PC-9 (cell line): ENCODE measurements at regions of chr4 and their contacts with region 1.

Region 1: GRCh38 chr4:51943221-51943934 is 76.8 kb downstream of the LRRC66 start:
- DNase-seq: peak; percentile 38 to 40
- H3K4me3 ChIP-seq: no peak overlapping the region
- H3K27ac ChIP-seq: no peak overlapping the region
- H3K4me1 ChIP-seq: peaks cover 13% of the 10 kb centered on the region
- H3K27me3 ChIP-seq: no peaks in the 10 kb centered on the region
- CTCF ChIP-seq: no peak

Region 2: DNA sequence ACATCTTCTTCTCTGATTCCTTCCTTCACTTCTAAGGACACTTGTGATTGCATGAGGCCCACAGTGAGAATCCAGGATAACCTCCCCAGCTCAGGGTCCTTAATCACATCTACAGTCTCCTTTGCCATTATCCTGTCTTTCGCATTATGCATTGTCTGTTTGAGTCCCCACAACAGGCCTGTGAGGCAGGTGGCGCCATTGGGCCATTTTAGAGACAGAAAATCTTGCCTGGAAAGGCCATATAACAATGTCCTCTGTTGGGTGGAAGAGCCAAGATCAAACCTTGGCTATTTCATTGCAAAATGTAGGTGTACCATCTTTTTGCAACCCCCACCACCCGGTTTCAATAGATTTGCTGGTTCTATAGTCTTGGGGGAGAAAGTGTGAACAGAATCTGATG is 112.2 kb before region 1 on chr4:
- CTCF ChIA-PET with region 1: no interaction called
- POLR2A ChIA-PET with region 1: no interaction called
- intact Hi-C with region 1: no loop called
- DNase-seq: peak in 1 of 2 experiments; percentile 37
- H3K4me3 ChIP-seq: no peak overlapping the region
- H3K27ac ChIP-seq: no peak overlapping the region
- H3K4me1 ChIP-seq: no peaks in the 10 kb centered on the region
- H3K27me3 ChIP-seq: no peaks in the 10 kb centered on the region
- CTCF ChIP-seq: peak; percentile 56

Region 3: DNA sequence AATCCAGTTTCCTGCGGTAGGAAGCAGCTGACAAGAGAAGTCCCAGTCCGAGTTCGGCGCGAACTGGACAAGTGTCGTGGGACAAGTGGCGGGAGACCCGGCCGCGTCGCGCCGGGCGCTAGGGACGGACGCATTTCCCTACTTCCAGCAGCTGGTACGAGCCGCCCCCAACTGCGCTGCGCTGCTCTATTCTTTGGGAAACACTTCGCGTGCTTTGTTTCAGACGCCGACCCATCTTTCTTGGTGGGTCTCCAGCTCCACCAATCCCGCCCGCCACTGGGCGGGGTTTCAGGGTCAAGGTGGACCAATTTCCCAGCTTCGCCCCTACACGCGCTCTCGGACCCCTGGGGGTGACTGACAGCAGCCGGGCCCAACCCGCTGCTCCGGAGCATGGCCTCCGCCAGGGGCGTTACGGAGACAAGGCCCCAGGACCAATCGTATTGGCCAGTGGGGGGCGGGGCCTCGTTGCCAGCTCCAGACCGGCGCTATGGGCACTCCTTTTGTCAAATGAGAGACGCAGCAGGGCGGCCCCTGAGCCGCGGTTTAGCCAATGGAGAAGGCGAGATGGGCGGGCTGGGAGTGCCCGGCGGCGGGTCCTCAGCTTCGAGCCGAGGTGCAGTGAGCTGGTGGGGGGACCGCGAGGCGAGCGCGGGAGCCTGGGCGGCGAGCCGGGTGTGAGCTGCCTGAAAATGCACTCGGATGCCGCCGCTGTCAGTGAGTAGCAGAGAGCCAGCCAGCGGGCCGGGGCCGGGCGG is 100.6 kb before region 1 on chr4 and contains the start of gene DCUN1D4:
- CTCF ChIA-PET with region 1: no interaction called
- POLR2A ChIA-PET with region 1: interaction called, 3 read pairs
- intact Hi-C with region 1: loop called (anchors 2 kb)
- DNase-seq: peak; percentile 93 to 97
- H3K4me3 ChIP-seq: peak within 1 kb of the TSS; percentile 73
- H3K27ac ChIP-seq: peak within 1 kb of the TSS; percentile 51; the same call in 1 of the 2 replicates
- H3K4me1 ChIP-seq: peaks cover 9% of the 10 kb centered on the region
- H3K27me3 ChIP-seq: no peaks in the 10 kb centered on the region
- CTCF ChIP-seq: no peak; the same call in 1 of the 2 replicates
- total RNA-seq, gene DCUN1D4: 24.9 and 25.3 TPM in 2 replicates

Region 4: DNA sequence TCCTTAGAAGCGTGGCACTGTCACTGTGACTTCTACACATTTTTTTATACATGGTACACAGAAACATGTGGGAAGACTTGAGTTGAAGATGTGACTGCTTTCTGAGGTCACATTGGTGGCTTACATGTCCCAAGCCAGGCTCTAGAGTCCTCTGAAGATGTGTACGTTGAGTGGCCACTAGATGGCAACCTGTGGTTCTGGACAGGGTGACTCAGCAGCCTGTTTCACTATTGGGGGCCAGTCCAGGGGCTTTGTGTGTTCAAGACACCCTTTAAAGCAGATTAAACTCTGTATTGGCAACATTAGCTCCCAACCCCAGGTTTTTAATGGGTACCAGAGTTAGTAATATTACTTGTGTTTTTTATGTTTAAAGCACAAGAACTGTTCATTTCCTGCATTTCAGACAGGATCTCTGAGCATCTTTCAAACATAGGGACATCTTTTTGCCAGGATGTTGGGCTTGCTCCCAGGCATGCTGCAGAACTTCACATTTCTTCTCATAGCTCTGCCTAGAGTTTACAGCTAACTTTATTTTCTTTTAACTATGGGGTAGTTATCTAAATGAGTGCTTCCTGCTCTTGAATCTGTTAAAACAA is 47.5 kb before region 1 on chr4:
- CTCF ChIA-PET with region 1: no interaction called
- POLR2A ChIA-PET with region 1: no interaction called
- intact Hi-C with region 1: loop called (anchors 5 kb)
- DNase-seq: peak in 1 of 2 experiments; percentile 33
- H3K4me3 ChIP-seq: no peak overlapping the region
- H3K27ac ChIP-seq: 0 out of 2 replicates have a peak overlapping the region, but pooled peaks have one; percentile 41
- H3K4me1 ChIP-seq: no peaks in the 10 kb centered on the region
- H3K27me3 ChIP-seq: no peaks in the 10 kb centered on the region
- CTCF ChIP-seq: peak; percentile 80

Region 5: GRCh38 chr4:52001616-52002015 is 58.2 kb after region 1 on chr4:
- CTCF ChIA-PET with region 1: no interaction called
- POLR2A ChIA-PET with region 1: no interaction called
- intact Hi-C with region 1: loop called (anchors 5 kb)
- DNase-seq: peak; percentile 22 to 55
- H3K4me3 ChIP-seq: no peak overlapping the region
- H3K27ac ChIP-seq: no peak overlapping the region
- H3K4me1 ChIP-seq: peaks cover 7% of the 10 kb centered on the region
- H3K27me3 ChIP-seq: no peaks in the 10 kb centered on the region
- CTCF ChIP-seq: no peak